PC-9 (cell line): ENCODE measurements at regions of chr16 and their contacts with region 1.

Region 1: GRCh38 chr16:29815793-29816693 is at the start of gene PAGR1:
- DNase-seq: peak; percentile 98 to 100
- H3K4me3 ChIP-seq: peak within 1 kb of the TSS; percentile 83
- H3K27ac ChIP-seq: peak within 1 kb of the TSS; percentile 55
- H3K4me1 ChIP-seq: peaks cover 44% of the 10 kb centered on the region
- H3K27me3 ChIP-seq: no peaks in the 10 kb centered on the region
- CTCF ChIP-seq: peak; percentile 94
- total RNA-seq, gene PAGR1: 27.5 and 44.6 TPM in 2 replicates

Region 2: DNA sequence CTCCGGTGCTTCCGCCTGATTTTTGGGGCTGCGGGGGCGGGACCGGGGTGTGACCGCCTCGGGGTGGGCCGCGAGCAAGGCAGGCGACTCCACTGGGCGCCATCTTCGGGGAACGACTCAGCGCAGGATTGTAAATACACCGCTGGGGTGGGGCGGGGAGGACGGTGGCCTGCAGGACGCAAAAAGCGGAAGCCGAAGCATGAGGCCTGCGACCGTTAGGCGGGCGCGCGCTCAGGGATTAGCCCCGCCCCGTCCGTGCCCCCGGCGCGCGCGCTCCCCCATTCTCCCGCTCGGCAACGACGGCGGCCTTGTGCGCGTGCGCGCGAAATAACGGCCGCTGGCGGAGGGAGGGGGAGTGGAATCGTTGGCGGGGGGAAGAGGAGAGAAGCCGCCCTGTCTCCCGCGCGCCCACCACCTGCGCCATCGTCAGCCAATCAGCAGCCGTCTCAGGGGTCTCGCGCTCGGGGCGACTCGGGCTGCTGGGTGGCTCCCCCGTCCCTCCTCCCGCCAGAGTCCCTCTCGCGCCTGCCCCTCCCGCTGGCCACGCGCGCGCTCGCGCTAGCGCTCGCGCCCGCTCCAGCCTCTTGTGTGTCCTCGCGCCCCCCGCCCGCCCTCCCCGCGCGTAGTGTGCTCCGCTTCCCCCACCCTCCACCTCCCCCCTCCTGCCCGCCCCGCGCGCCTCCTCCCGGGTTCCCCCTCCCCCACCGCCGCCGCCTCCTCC is 10.5 kb before region 1 on chr16:
- CTCF ChIA-PET with region 1: no interaction called
- POLR2A ChIA-PET with region 1: interaction called, 17 read pairs
- intact Hi-C with region 1: no loop called
- DNase-seq: peak; percentile 94 to 99
- H3K4me3 ChIP-seq: peak overlapping the region; percentile 76
- H3K27ac ChIP-seq: peak overlapping the region; percentile 68
- H3K4me1 ChIP-seq: peaks cover 29% of the 10 kb centered on the region
- H3K27me3 ChIP-seq: no peaks in the 10 kb centered on the region
- CTCF ChIP-seq: no peak

Region 3: DNA sequence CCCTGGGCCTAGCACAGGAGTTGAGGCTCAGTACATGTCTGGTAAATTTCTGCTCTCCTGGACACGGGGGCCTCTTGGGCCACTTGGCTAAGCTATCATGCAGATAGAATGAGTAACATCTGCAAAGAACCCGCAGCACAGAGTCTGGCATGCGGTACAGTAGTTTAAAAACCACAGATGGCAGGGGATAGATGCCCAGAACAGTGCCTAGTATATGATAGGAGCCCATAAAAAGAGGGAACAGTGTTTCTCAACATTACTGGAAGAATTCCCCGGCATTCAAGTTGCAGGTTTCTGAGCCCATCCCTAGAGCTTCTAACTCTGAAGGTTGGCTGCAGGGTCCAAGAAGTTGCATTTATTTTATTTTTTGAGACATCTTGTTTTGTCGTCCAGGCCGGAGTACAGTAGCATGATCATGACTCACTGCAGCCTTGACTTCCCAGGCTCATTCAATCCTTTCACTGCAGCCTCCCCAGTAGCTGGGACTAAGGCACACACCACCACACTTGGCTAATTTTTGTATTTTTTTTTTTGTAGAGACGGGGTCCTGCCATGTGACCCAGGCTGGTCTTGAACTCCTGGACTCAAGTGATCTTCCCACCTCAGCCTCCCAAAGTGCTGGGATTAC is 41.2 kb after region 1 on chr16:
- CTCF ChIA-PET with region 1: no interaction called
- POLR2A ChIA-PET with region 1: interaction called, 15 read pairs
- intact Hi-C with region 1: loop called (anchors 2 kb)
- DNase-seq: no peak
- H3K4me3 ChIP-seq: no peak overlapping the region
- H3K27ac ChIP-seq: no peak overlapping the region
- H3K4me1 ChIP-seq: peaks cover 9% of the 10 kb centered on the region
- H3K27me3 ChIP-seq: no peaks in the 10 kb centered on the region
- CTCF ChIP-seq: no peak

Region 4: GRCh38 chr16:29877266-29877961 is 61.4 kb after region 1 on chr16:
- CTCF ChIA-PET with region 1: no interaction called
- POLR2A ChIA-PET with region 1: no interaction called
- intact Hi-C with region 1: no loop called
- DNase-seq: peak in 1 of 2 experiments; percentile 51
- H3K4me3 ChIP-seq: no peak overlapping the region
- H3K27ac ChIP-seq: no peak overlapping the region
- H3K4me1 ChIP-seq: no peaks in the 10 kb centered on the region
- H3K27me3 ChIP-seq: no peaks in the 10 kb centered on the region
- CTCF ChIP-seq: no peak

Region 5: GRCh38 chr16:29900102-29900887 is 84.3 kb after region 1 on chr16 and contains the start of gene ASPHD1:
- CTCF ChIA-PET with region 1: interaction called, 8 read pairs
- POLR2A ChIA-PET with region 1: interaction called, 5 read pairs
- intact Hi-C with region 1: loop called (anchors 5 kb)
- DNase-seq: peak; percentile 62 to 86
- H3K4me3 ChIP-seq: peak within 1 kb of the TSS; percentile 72
- H3K27ac ChIP-seq: peak within 1 kb of the TSS; percentile 51
- H3K4me1 ChIP-seq: peaks cover 16% of the 10 kb centered on the region; the same call in 1 of the 2 replicates
- H3K27me3 ChIP-seq: no peaks in the 10 kb centered on the region
- CTCF ChIP-seq: no peak
- total RNA-seq, gene ASPHD1: 8.3 and 11.3 TPM in 2 replicates

Region 6: DNA sequence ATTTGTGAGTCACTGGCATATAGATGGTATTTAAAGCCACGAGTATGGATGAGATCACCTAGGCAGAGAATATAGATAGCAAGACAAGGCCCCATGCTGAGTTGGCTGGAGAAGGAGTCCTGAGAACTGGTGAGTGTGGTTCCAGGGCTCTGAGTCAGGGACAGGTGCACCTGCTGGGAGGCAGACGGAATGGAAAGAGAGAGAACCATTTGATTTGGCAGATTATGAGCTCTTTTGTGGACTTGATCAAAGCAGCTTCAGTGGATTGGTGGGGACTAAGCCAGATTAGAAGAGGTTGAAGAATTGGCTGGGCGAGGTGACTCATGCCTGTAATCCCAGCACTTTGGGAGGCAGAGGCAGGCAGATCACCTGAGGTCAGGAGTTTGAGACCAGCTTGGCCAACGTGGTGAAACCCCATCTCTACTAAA is 202.7 kb after region 1 on chr16:
- CTCF ChIA-PET with region 1: no interaction called
- POLR2A ChIA-PET with region 1: no interaction called
- intact Hi-C with region 1: loop called (anchors 1 kb)
- DNase-seq: peak in 1 of 2 experiments; percentile 89
- H3K4me3 ChIP-seq: no peak overlapping the region
- H3K27ac ChIP-seq: no peak overlapping the region
- H3K4me1 ChIP-seq: no peaks in the 10 kb centered on the region; the same call in 1 of the 2 replicates
- H3K27me3 ChIP-seq: peaks cover 8% of the 10 kb centered on the region; the same call in 1 of the 2 replicates
- CTCF ChIP-seq: no peak

Region 7: DNA sequence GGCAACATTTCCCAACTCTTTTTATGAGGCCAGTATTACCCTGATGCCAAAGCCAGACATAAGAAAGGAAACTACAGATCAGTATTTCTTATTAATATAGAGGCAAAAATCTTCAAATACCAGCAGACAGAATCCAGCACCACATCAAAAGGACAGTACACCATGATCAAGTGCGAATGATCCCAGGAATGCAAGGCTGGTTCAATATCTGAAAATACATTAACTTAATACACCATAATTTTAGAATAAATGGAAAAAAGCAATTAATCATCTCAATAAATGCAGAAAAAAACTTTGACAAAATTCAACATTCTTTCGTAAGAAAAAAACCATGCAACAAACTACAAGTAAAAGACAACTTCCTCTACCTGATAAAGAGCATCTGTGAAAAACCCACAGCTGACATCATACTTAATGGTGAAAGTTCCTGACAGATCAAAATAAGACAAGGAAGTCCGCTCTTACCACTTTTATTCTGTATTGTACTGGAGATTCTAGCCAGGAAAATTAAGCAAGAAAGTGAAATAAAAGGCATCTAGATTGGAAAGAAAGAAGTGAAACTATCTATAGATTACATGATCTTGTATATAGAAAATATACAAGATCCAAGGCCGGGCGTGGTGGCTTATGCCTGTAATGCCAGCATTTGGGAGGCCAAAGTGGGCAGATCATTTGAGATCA is 333.3 kb after region 1 on chr16:
- CTCF ChIA-PET with region 1: no interaction called
- POLR2A ChIA-PET with region 1: no interaction called
- intact Hi-C with region 1: no loop called
- DNase-seq: no peak
- H3K4me3 ChIP-seq: no peak overlapping the region
- H3K27ac ChIP-seq: no peak overlapping the region
- H3K4me1 ChIP-seq: no peaks in the 10 kb centered on the region
- H3K27me3 ChIP-seq: no peaks in the 10 kb centered on the region
- CTCF ChIP-seq: no peak